ENCODE measurements at regions of chr1 and their contacts with region 1.

Region 1: GRCh38 chr1:167803358-167804207 is 81.8 kb downstream of the MPZL1 start:
- DNase-seq: peak; percentile 90 to 91
- H3K4me3 ChIP-seq: no peak overlapping the region
- H3K4me3 Mint-ChIP-seq: peak overlapping the region; percentile 35
- H3K27ac Mint-ChIP-seq: peak overlapping the region; percentile 45
- H3K4me1 ChIP-seq: peaks cover 32% of the 10 kb centered on the region
- H3K4me1 Mint-ChIP-seq: peaks cover 46% of the 10 kb centered on the region
- H3K27me3 ChIP-seq: no peaks in the 10 kb centered on the region
- H3K27me3 Mint-ChIP-seq: no peaks in the 10 kb centered on the region
- CTCF ChIP-seq: peak; percentile 86 to 87

Region 2: DNA sequence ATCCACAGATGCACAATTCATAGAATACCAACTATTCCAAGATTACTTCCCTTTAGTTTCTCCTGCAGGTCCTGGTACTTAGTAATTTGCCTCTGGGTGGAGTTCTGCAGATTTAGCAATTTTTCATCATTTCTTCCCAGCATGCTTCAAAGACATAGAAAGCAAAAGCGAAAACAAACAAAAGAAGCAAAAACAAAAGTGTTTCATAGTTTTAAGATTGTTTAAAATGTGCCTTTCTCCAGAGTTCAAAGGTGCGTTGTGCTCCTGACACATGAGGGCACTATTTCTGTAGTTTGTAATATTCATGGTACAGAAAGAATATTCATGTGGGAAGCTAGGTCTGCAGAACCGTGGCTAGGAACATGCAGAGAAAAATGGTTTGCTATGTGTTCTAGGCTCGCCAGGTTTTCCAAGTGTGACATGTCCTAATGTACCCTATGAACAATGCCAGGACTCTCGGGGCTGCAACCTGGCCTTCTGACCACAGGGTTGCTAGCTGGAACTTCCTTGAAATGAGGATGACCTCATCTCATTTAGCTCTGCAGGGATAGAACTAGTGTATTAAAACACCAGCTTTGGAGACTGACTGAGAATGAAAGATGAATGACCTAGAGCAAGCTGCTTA is 203.5 kb before region 1 on chr1:
- CTCF ChIA-PET with region 1: no interaction called
- POLR2A ChIA-PET with region 1: no interaction called
- intact Hi-C with region 1: loop called (anchors 1 kb)
- DNase-seq: peak in 1 of 2 experiments; percentile 8
- H3K4me3 ChIP-seq: no peak overlapping the region
- H3K4me3 Mint-ChIP-seq: no peak overlapping the region
- H3K27ac Mint-ChIP-seq: no peak overlapping the region
- H3K4me1 ChIP-seq: no peaks in the 10 kb centered on the region
- H3K4me1 Mint-ChIP-seq: peaks cover 14% of the 10 kb centered on the region
- H3K27me3 ChIP-seq: no peaks in the 10 kb centered on the region
- H3K27me3 Mint-ChIP-seq: peaks cover 6% of the 10 kb centered on the region
- CTCF ChIP-seq: peak; percentile 42 to 44

Region 3: GRCh38 chr1:167687919-167688519 is 115.6 kb before region 1 on chr1:
- CTCF ChIA-PET with region 1: no interaction called
- POLR2A ChIA-PET with region 1: no interaction called
- intact Hi-C with region 1: no loop called
- DNase-seq: peak; percentile 74 to 80
- H3K4me3 ChIP-seq: no peak overlapping the region
- H3K4me3 Mint-ChIP-seq: no peak overlapping the region
- H3K27ac Mint-ChIP-seq: no peak overlapping the region
- H3K4me1 ChIP-seq: no peaks in the 10 kb centered on the region
- H3K4me1 Mint-ChIP-seq: no peaks in the 10 kb centered on the region
- H3K27me3 ChIP-seq: no peaks in the 10 kb centered on the region
- H3K27me3 Mint-ChIP-seq: no peaks in the 10 kb centered on the region
- CTCF ChIP-seq: peak; percentile 83 to 86

Region 4: GRCh38 chr1:167715157-167715999 is 88.2 kb before region 1 on chr1:
- CTCF ChIA-PET with region 1: no interaction called
- POLR2A ChIA-PET with region 1: no interaction called
- intact Hi-C with region 1: loop called (anchors 1 kb)
- DNase-seq: peak; percentile 84 to 89
- H3K4me3 ChIP-seq: peak overlapping the region; percentile 93
- H3K4me3 Mint-ChIP-seq: peak overlapping the region; percentile 83
- H3K27ac Mint-ChIP-seq: peak overlapping the region; percentile 98
- H3K4me1 ChIP-seq: peaks cover 34% of the 10 kb centered on the region
- H3K4me1 Mint-ChIP-seq: peaks cover 32% of the 10 kb centered on the region
- H3K27me3 ChIP-seq: no peaks in the 10 kb centered on the region
- H3K27me3 Mint-ChIP-seq: peaks cover 8% of the 10 kb centered on the region
- CTCF ChIP-seq: peak; percentile 81 to 89

Region 5: DNA sequence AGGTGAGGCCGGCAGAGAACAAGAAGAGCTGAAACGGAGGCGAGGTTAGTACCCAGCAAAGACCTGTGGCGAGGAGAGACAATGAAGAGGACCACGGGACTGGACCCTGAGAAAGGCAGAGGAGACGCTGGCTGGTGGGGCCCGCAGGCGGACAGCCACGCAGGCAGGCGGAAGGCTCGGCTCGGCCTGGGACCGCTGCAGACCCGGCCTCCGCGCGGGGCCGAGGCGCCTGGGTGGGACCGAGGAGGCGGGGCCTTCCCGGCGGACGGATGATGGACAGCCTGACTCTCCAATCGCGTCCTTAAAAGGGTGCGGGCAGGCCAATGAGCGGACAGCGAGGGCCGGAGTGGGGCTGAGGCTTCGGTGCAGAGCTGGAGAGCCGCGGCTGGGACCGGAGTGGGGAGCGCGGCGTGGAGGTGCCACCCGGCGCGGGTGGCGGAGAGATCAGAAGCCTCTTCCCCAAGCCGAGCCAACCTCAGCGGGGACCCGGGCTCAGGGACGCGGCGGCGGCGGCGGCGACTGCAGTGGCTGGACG is 81.9 kb before region 1 on chr1 and contains the start of gene MPZL1:
- CTCF ChIA-PET with region 1: no interaction called
- POLR2A ChIA-PET with region 1: no interaction called
- intact Hi-C with region 1: loop called (anchors 1 kb)
- DNase-seq: peak; percentile 96 to 98
- H3K4me3 ChIP-seq: peak within 1 kb of the TSS; percentile 81
- H3K4me3 Mint-ChIP-seq: peak within 1 kb of the TSS; percentile 67
- H3K27ac Mint-ChIP-seq: peak within 1 kb of the TSS; percentile 85
- H3K4me1 ChIP-seq: peaks cover 63% of the 10 kb centered on the region
- H3K4me1 Mint-ChIP-seq: peaks cover 55% of the 10 kb centered on the region
- H3K27me3 ChIP-seq: no peaks in the 10 kb centered on the region
- H3K27me3 Mint-ChIP-seq: no peaks in the 10 kb centered on the region
- CTCF ChIP-seq: no peak
- total RNA-seq, gene MPZL1: 273 and 280 TPM in 2 replicates

Region 6: DNA sequence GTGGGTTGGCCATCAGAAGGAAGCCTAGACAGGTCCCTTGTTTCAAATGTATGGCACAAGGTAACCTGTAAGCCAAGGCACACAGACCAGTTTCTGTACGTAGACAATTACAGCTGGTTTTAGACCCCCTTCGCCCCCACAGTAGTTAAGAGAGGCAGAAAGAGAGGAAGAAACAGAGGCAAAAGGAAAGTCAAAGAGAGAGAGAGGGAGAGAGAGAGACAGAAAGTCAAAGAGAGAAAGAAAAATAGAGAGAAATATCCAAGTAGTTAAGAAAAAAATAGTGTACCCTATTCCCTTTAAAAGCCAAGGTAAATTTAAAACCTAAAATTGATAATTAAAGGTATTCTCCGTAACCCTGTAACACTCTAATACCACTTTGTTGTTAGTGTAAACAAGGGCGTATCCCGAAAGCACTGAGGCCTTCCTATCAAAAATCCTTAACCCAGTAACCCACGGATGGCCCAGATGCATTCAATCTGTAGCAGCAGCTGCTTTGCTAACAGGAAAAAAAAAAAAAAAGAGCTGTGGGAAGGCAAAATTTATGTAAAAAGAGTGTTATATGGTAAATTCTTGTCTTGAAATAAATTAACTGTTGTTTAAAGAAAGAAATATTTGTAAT is 60.9 kb after region 1 on chr1:
- CTCF ChIA-PET with region 1: no interaction called
- POLR2A ChIA-PET with region 1: no interaction called
- intact Hi-C with region 1: loop called (anchors 5 kb)
- DNase-seq: no peak
- H3K4me3 ChIP-seq: no peak overlapping the region
- H3K4me3 Mint-ChIP-seq: peak overlapping the region; percentile 49
- H3K27ac Mint-ChIP-seq: peak overlapping the region; percentile 23
- H3K4me1 ChIP-seq: peaks cover 24% of the 10 kb centered on the region
- H3K4me1 Mint-ChIP-seq: peaks cover 25% of the 10 kb centered on the region
- H3K27me3 ChIP-seq: no peaks in the 10 kb centered on the region
- H3K27me3 Mint-ChIP-seq: no peaks in the 10 kb centered on the region
- CTCF ChIP-seq: no peak

Region 7: DNA sequence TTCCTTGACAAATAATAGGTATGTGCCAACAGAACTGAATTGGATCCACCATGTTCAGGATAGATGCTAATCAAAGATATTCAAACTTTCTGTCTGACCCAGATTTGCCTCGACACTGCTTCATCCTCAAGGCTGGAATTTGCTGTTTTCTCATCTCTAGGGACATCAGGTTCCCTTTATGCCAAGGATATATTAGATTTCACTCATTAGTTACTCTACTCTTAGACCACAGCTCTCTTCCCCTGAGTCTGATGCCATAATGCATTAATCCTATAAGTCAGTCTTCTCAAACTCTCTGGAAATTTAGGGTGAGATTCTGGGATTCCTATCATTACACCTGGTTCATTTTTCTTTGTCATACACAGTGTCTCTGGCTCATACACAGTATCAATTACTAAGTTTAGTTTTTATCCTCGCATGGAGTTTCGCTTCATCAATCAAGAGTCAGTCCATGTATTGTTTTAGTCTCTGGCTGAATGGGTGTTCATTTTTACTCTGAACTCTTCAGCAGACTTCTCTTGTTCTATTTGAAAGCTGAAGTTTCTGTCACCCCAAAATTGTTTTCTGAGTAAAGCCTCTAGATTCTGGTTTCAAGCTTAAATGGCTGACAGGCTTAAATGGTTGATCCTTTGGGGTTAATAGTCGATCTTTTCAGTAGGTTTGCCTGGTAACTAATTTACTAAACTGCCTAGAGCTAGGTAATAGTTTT is 123.6 kb after region 1 on chr1:
- CTCF ChIA-PET with region 1: interaction called, 3 read pairs
- POLR2A ChIA-PET with region 1: no interaction called
- intact Hi-C with region 1: loop called (anchors 1 kb)
- DNase-seq: no peak
- H3K4me3 ChIP-seq: peak overlapping the region; percentile 29
- H3K4me3 Mint-ChIP-seq: peak overlapping the region; percentile 65
- H3K27ac Mint-ChIP-seq: peak overlapping the region; percentile 30
- H3K4me1 ChIP-seq: peaks cover 60% of the 10 kb centered on the region
- H3K4me1 Mint-ChIP-seq: peaks cover 33% of the 10 kb centered on the region
- H3K27me3 ChIP-seq: no peaks in the 10 kb centered on the region
- H3K27me3 Mint-ChIP-seq: no peaks in the 10 kb centered on the region
- CTCF ChIP-seq: no peak